ENCODE measurements at regions of chr1 and their contacts with region 1.

Region 1: GRCh38 chr1:23456226-23456625 is 27.8 kb downstream of the ASAP3 start:
- DNase-seq: peak; percentile 39
- H3K27ac ChIP-seq: no peak overlapping the region
- CTCF ChIP-seq: no peak

Region 2: DNA sequence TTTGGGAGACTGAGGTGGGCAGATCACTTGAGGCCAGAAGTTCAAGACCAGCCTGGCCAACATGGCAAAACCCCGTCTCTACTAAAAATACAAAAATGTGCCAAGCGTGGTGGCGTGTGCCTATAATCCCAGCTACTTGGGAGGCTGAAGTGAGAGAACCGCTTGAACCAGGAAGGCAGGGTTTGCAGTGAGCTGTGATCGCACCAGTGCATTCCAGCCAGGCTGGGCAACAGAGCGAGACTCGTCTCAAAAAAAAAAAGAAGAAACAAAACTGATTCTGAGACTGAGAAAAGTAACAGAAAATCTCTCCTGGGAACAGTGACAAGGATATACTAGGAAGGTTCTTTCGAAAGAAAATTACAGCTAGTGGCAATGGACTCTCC is 1694.2 kb before region 1 on chr1:
- CTCF ChIA-PET with region 1: no interaction called
- POLR2A ChIA-PET with region 1: no interaction called
- DNase-seq: no peak
- H3K27ac ChIP-seq: no peak overlapping the region
- CTCF ChIP-seq: no peak

Region 3: GRCh38 chr1:23514111-23514679 is 58.0 kb after region 1 on chr1:
- CTCF ChIA-PET with region 1: no interaction called
- POLR2A ChIA-PET with region 1: interaction called, 11 read pairs
- DNase-seq: no peak
- H3K27ac ChIP-seq: no peak overlapping the region
- CTCF ChIP-seq: no peak

Measured in RWPE1 (cell line).